ENCODE measurements at regions of chr6 and their contacts with region 1.

Region 1: GRCh38 chr6:70686548-70687133 is 19.0 kb downstream of the SMAP1 start:
- DNase-seq: no peak
- H3K4me3 ChIP-seq: no peak overlapping the region
- H3K27ac ChIP-seq: no peak overlapping the region
- H3K4me1 ChIP-seq: peaks cover 0 to 2% (median 0%) of the 10 kb centered on the region in 4 experiments; a peak in 1 of 7 replicates
- H3K27me3 ChIP-seq: no peaks in the 10 kb centered on the region
- CTCF ChIP-seq: peak in 2 of 3 experiments; percentile 20 to 46; a peak in 2 of 4 replicates
- EP300 ChIP-seq: no peak
- POLR2A ChIP-seq: no peak
- RAD21 ChIP-seq: peak in 1 of 2 experiments; percentile 53; a peak in 3 of 4 replicates

Region 2: GRCh38 chr6:70538376-70538775 is 148.3 kb before region 1 on chr6:
- CTCF ChIA-PET with region 1: interaction called, 10 read pairs
- POLR2A ChIA-PET with region 1: no interaction called
- DNase-seq: no peak
- H3K4me3 ChIP-seq: no peak overlapping the region
- H3K27ac ChIP-seq: no peak overlapping the region
- H3K4me1 ChIP-seq: no peaks in the 10 kb centered on the region
- H3K27me3 ChIP-seq: no peaks in the 10 kb centered on the region
- CTCF ChIP-seq: no peak
- EP300 ChIP-seq: no peak
- POLR2A ChIP-seq: no peak
- RAD21 ChIP-seq: no peak

Region 3: DNA sequence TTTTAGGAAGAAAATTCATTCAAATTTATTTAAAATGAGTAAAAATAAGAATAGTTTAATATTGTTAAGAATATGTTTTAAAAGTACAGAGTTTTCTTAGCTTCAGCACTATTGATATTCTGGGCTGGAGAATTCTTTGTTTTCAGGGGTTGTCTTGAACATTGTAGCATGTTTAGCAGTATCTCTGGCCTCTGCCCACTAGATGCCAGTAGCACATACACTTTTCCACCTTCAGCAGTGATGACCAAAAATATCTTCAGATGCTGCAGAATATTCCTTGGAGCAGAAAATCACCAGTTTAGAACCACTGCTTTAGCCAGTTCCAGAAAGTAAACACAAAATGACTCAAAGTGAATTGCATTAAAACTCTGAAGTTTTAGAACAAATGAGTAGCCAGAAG is 139.3 kb before region 1 on chr6:
- CTCF ChIA-PET with region 1: interaction called, 39 read pairs
- POLR2A ChIA-PET with region 1: no interaction called
- DNase-seq: no peak
- H3K4me3 ChIP-seq: no peak overlapping the region
- H3K27ac ChIP-seq: no peak overlapping the region
- H3K4me1 ChIP-seq: peaks cover 0 to 5% (median 0%) of the 10 kb centered on the region in 4 experiments; a peak in 1 of 7 replicates
- H3K27me3 ChIP-seq: no peaks in the 10 kb centered on the region
- CTCF ChIP-seq: peak in 2 of 3 experiments; percentile 59 to 60; a peak in 3 of 4 replicates
- EP300 ChIP-seq: no peak
- POLR2A ChIP-seq: no peak
- RAD21 ChIP-seq: peak; percentile 73 to 80

Region 4: GRCh38 chr6:70667711-70668498 is 18.7 kb before region 1 on chr6 and contains the start of gene SMAP1:
- CTCF ChIA-PET with region 1: interaction called, 17 read pairs
- POLR2A ChIA-PET with region 1: interaction called, 7 read pairs
- DNase-seq: peak; percentile 83 to 93
- H3K4me3 ChIP-seq: peak within 1 kb of the TSS; percentile 80 to 98 (median 86)
- H3K27ac ChIP-seq: peak within 1 kb of the TSS; percentile 63; the same call in 1 of the 2 replicates
- H3K4me1 ChIP-seq: peaks cover 0 to 6% (median 3%) of the 10 kb centered on the region in 4 experiments; a peak in 3 of 7 replicates
- H3K27me3 ChIP-seq: no peaks in the 10 kb centered on the region
- CTCF ChIP-seq: peak in 1 of 3 experiments; percentile 7; a peak in 2 of 4 replicates
- EP300 ChIP-seq: peak in 1 of 2 experiments; percentile 42; a peak in 1 of 3 replicates
- POLR2A ChIP-seq: peak; percentile 68 to 72
- RAD21 ChIP-seq: peak; percentile 5 to 30; a peak in 1 of 4 replicates
- total RNA-seq, gene SMAP1: 31.8 and 32.4 TPM in 2 replicates

Region 5: DNA sequence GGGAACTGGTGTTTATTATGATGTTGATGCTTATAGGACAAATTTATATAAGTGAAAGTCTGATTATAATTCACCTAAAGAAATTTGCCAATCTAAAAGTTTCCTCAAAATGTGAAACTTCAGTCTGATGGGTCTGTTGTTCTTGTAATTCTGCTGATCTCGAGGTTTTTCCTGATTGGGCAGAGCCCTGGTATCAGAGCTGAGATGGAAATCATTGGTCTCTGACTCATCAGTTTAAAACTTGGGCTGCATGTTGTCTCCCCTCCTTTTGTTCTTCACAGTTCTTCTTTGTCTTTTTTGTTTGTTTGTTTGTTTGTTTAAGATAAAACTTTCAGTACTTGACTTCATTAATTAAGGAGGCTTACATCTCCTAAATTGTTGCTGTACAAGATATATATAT is 13.0 kb before region 1 on chr6:
- CTCF ChIA-PET with region 1: interaction called, 18 read pairs
- POLR2A ChIA-PET with region 1: no interaction called
- DNase-seq: peak in 1 of 2 experiments; percentile 7
- H3K4me3 ChIP-seq: no peak overlapping the region
- H3K27ac ChIP-seq: no peak overlapping the region
- H3K4me1 ChIP-seq: peaks cover 0 to 5% (median 2%) of the 10 kb centered on the region in 4 experiments; a peak in 2 of 7 replicates
- H3K27me3 ChIP-seq: no peaks in the 10 kb centered on the region
- CTCF ChIP-seq: no peak
- EP300 ChIP-seq: no peak
- POLR2A ChIP-seq: no peak
- RAD21 ChIP-seq: no peak

Region 6: DNA sequence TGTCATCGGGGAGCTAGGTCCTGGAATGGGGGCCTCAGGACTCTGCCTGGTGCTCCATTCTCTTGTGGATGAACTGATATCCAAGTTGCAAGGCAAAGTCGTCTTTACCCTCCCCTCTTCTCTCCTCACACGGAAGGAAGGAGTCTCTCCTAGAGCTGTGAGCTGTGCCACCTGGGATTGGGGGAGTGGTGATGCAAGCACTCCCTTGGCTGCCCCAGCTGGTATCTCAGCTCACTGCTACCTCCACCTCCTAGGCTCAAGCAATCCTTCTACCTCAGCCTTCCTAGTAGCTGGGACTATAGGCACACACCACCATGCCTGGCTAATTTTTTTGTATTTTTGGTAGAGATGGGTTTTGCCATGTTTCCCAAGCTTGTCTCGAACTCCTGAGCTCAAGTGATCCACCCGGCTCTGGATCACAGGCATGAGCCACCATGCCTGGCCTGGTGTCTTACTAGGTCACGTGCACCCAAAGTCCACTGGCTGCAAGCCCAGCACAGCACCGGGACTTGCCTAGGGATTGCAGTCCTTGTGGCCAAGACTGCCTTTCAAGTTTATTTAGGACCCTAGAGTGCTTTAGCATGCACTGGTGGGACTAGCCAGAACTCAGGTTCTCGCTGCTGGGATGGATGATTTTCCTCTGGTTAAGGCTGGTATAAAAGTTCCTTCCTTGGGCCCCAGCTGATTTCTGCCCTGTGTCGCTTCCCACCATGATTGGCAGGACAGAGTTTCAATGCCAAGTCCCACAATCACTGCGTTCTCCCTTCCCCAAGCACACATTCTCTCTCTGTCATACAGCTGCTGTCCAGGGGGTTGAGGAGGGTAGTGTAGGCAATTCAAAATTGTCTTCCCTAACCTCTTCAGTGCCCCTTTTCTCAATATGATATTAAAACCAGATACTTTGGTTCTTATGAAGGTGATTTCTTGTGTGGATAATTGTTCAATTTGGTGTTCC is 14.6 kb after region 1 on chr6:
- CTCF ChIA-PET with region 1: interaction called, 10 read pairs
- POLR2A ChIA-PET with region 1: no interaction called
- DNase-seq: no peak
- H3K4me3 ChIP-seq: no peak overlapping the region
- H3K27ac ChIP-seq: no peak overlapping the region
- H3K4me1 ChIP-seq: no peaks in the 10 kb centered on the region
- H3K27me3 ChIP-seq: no peaks in the 10 kb centered on the region
- CTCF ChIP-seq: no peak
- EP300 ChIP-seq: no peak
- POLR2A ChIP-seq: no peak
- RAD21 ChIP-seq: no peak

Region 7: GRCh38 chr6:70863343-70863742 is 176.7 kb after region 1 on chr6:
- CTCF ChIA-PET with region 1: no interaction called
- POLR2A ChIA-PET with region 1: no interaction called
- DNase-seq: no peak
- H3K4me3 ChIP-seq: no peak overlapping the region
- H3K27ac ChIP-seq: no peak overlapping the region
- H3K4me1 ChIP-seq: peaks cover 0 to 8% (median 4%) of the 10 kb centered on the region in 4 experiments; a peak in 4 of 7 replicates
- H3K27me3 ChIP-seq: no peaks in the 10 kb centered on the region
- CTCF ChIP-seq: no peak
- EP300 ChIP-seq: no peak
- POLR2A ChIP-seq: no peak
- RAD21 ChIP-seq: no peak

Region 8: GRCh38 chr6:71478834-71479541 is 792.3 kb after region 1 on chr6:
- CTCF ChIA-PET with region 1: no interaction called
- POLR2A ChIA-PET with region 1: no interaction called
- DNase-seq: no peak
- H3K4me3 ChIP-seq: no peak overlapping the region
- H3K27ac ChIP-seq: no peak overlapping the region
- H3K4me1 ChIP-seq: peaks cover 0 to 4% (median 0%) of the 10 kb centered on the region in 4 experiments; a peak in 1 of 7 replicates
- H3K27me3 ChIP-seq: no peaks in the 10 kb centered on the region
- CTCF ChIP-seq: no peak
- EP300 ChIP-seq: no peak
- POLR2A ChIP-seq: no peak
- RAD21 ChIP-seq: no peak